ENCODE measurements at regions of chr6 and their contacts with region 1.

Region 1: GRCh38 chr6:125301435-125302391 is at the start of gene HDDC2:
- DNase-seq: peak; percentile 70
- H3K4me3 ChIP-seq: peak within 1 kb of the TSS; percentile 54
- H3K27ac ChIP-seq: peak within 1 kb of the TSS; percentile 77
- H3K4me1 ChIP-seq: peaks cover 8% of the 10 kb centered on the region
- H3K27me3 ChIP-seq: no peaks in the 10 kb centered on the region
- CTCF ChIP-seq: no peak
- total RNA-seq, gene HDDC2: 39.4 to 44.8 TPM

Region 2: DNA sequence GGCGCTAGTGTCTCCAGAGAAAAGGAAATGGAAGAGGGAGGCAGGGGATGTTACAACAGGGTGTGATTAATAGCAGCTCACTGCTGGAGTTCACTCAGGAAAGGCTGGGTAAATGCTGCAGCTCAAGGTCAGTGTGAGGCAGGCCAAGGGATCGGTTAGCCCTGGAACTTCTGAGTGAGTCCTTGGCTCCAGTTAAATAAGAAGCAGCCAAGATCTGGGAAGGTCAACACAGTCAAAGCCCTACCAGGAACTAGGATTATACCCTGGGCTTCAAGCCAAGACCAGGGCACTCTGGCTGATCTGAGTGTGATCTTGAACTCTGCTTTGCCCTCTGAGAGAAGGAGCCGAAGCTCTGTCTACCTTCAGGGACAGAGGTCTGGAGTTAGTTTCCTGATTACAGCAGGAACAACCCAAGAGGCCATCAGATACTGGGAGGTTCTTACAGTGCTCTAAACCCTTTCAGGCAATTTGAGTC is 103.9 kb before region 1 on chr6:
- intact Hi-C with region 1: loop called (anchors 5 kb)
- DNase-seq: peak; percentile 85
- H3K4me3 ChIP-seq: no peak overlapping the region
- H3K27ac ChIP-seq: peak overlapping the region; percentile 54
- H3K4me1 ChIP-seq: peaks cover 8% of the 10 kb centered on the region
- H3K27me3 ChIP-seq: no peaks in the 10 kb centered on the region
- CTCF ChIP-seq: no peak

Region 3: GRCh38 chr6:125995972-125996580 is 694.4 kb after region 1 on chr6:
- intact Hi-C with region 1: no loop called
- DNase-seq: peak; percentile 77
- H3K4me3 ChIP-seq: no peak overlapping the region
- H3K27ac ChIP-seq: no peak overlapping the region
- H3K4me1 ChIP-seq: no peaks in the 10 kb centered on the region
- H3K27me3 ChIP-seq: no peaks in the 10 kb centered on the region
- CTCF ChIP-seq: peak; percentile 95

Measured in colonic mucosa (tissue), 4 donors.